Esophagus muscularis mucosa (tissue), 4 donors: ENCODE measurements at regions of chr14 and their contacts with region 1.

Region 1: GRCh38 chr14:92513204-92513973 is at the start of gene RIN3:
- DNase-seq: no peak
- H3K4me3 ChIP-seq: peak within 1 kb of the TSS; percentile 66 to 90 (median 83)
- H3K27ac ChIP-seq: peak within 1 kb of the TSS; percentile 82 to 91 (median 85)
- H3K4me1 ChIP-seq: peaks cover 24 to 61% (median 41%) of the 10 kb centered on the region in 4 donors
- H3K27me3 ChIP-seq: no peaks in the 10 kb centered on the region
- CTCF ChIP-seq: no peak
- EP300 ChIP-seq: no peak
- POLR2A ChIP-seq: no peak
- total RNA-seq, gene RIN3: 10.6 to 20.0 (median 13.1) TPM

Region 2: GRCh38 chr14:92471919-92472318 is 41.5 kb before region 1 on chr14:
- intact Hi-C with region 1: no loop called
- DNase-seq: no peak
- H3K4me3 ChIP-seq: no peak overlapping the region
- H3K27ac ChIP-seq: no peak overlapping the region
- H3K4me1 ChIP-seq: peaks cover 0 to 15% (median 9%) of the 10 kb centered on the region in 4 donors
- H3K27me3 ChIP-seq: no peaks in the 10 kb centered on the region
- CTCF ChIP-seq: no peak
- EP300 ChIP-seq: no peak
- POLR2A ChIP-seq: no peak

Region 3: DNA sequence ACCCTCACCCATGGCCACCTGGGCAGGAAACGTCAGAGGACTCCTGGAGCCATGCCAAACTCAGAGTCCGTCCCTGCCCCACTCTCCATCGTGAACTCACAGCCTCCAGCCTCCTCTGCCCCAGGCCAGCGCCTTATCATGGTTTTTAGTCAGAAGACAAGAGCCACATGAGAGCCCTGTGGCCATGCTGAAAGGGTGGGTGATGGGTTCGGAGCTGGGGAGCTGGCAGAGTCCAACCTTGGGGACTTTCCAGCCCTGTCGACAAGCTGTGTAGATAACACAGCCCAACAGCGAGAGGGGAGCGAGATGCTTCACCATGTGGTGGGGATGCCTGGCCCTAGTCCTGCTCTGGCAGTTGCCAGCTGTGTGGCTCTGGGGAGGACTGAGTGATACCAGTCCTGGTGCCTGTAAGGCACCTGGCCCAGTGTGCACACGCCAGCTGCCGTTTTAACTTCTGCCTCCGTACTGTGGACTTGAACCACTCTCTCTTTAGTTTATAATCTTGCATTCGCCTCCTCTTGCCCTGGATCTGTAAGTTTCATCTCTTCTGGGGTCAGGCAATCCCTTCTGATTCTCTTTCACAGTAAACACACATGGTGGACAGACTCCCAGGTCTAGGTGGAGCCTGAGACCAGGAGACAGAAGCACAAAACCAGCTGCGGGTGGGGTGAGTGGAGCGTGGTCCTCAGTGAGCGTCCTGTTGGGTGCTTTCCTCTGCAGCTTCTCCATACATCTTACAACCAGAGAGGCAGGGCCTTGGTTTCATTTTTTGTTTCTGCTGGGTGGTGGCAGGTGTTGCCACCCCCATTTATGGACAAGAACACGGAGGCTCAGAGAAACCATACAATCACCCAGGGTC is 55.5 kb after region 1 on chr14:
- intact Hi-C with region 1: no loop called
- DNase-seq: no peak
- H3K4me3 ChIP-seq: no peak overlapping the region
- H3K27ac ChIP-seq: no peak overlapping the region
- H3K4me1 ChIP-seq: peaks cover 0 to 10% (median 6%) of the 10 kb centered on the region in 4 donors
- H3K27me3 ChIP-seq: no peaks in the 10 kb centered on the region
- CTCF ChIP-seq: no peak
- EP300 ChIP-seq: no peak
- POLR2A ChIP-seq: no peak

Region 4: GRCh38 chr14:92603309-92604242 is 90.2 kb after region 1 on chr14:
- intact Hi-C with region 1: loop called (anchors 5 kb)
- DNase-seq: no peak
- H3K4me3 ChIP-seq: no peak overlapping the region
- H3K27ac ChIP-seq: peak overlapping the region; percentile 85 to 91 (median 87)
- H3K4me1 ChIP-seq: peaks cover 31 to 66% (median 54%) of the 10 kb centered on the region in 4 donors
- H3K27me3 ChIP-seq: no peaks in the 10 kb centered on the region
- CTCF ChIP-seq: peak; percentile 40 to 62 (median 41)
- EP300 ChIP-seq: no peak
- POLR2A ChIP-seq: no peak

Region 5: DNA sequence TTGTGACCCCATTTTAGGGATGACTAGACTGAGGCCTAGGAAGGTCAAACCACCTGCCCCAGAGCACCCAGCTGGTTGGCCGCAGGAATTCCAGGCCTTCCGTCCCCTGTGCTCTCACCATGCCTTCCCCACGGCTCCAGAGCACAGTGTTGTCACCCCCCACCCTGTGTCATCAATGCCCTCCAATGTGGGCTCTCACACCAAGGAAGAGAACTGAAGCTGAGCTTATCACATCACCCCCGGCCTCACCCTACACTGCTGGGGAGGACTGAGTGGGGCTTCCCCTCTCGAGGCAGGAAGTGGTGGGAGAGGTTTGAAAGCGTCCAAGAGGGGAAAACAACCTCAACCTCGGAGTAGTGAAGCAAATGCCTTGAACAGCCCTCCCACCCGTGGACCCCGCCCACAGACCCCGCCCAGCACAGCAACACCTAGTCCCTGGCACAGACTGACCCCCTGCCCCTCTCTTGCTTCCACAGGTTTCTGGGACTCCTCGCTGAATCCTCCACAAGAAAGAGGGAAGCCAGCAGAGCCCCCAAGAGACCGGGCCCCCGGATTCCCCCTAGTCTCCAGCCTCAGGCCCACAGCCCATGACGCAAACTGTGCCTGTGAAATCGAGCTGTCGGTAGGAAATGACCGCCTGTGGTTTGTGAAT is 137.8 kb after region 1 on chr14:
- intact Hi-C with region 1: no loop called
- DNase-seq: no peak
- H3K4me3 ChIP-seq: peak overlapping the region in 2 of 4 donors; percentile 37 to 50
- H3K27ac ChIP-seq: peak overlapping the region; percentile 87 to 94 (median 92)
- H3K4me1 ChIP-seq: peaks cover 6 to 57% (median 50%) of the 10 kb centered on the region in 4 donors
- H3K27me3 ChIP-seq: no peaks in the 10 kb centered on the region
- CTCF ChIP-seq: no peak
- EP300 ChIP-seq: no peak
- POLR2A ChIP-seq: no peak

Region 6: GRCh38 chr14:92686900-92687444 is 173.6 kb after region 1 on chr14:
- intact Hi-C with region 1: loop called (anchors 5 kb)
- DNase-seq: no peak
- H3K4me3 ChIP-seq: peak overlapping the region; percentile 53 to 59 (median 58)
- H3K27ac ChIP-seq: peak overlapping the region; percentile 45 to 73 (median 68)
- H3K4me1 ChIP-seq: peaks cover 9 to 30% (median 22%) of the 10 kb centered on the region in 4 donors
- H3K27me3 ChIP-seq: no peaks in the 10 kb centered on the region
- CTCF ChIP-seq: peak; percentile 99 to 100 (median 99)
- EP300 ChIP-seq: no peak
- POLR2A ChIP-seq: no peak